Motor neuron (in vitro differentiated cells): ENCODE measurements at regions of chr1 and their contacts with region 1.

Region 1: DNA sequence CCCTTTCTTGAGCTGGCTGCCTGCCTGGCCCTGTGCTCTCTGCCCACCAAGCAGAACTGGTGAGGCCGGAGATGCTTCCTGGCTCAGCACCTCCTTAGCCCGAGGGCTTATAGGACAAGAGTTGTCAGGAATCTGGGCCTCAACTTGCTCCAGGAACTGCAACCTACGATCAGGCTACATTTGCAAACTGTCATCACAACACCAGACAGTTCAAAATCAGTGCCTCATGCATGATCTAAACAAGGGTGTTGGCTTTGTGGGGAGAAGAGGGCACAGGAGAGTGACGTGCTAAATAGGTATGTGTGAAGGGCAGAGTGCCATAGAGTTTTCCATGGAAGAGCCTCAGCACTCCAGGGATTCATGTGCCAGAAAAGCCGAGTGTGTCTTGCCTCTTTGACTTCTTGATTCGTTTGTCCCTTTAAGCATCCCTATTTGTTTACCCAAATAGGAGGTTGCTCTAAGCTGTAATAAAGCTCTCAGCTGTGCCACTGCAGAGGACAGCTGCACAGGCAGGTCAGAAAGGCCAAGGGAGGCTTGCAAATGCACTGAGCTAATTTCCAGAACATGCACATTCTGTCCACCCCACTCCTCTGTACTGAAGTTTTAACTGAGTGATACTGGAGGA is 30.2 kb upstream of the NEK2 start:
- ATAC-seq: peak in 3 of 8 experiments; percentile 89 to 94 (median 93)
- H3K4me3 ChIP-seq: no peak overlapping the region
- H3K27ac ChIP-seq: no peak overlapping the region
- H3K4me1 ChIP-seq: peaks cover 0 to 5% of the 10 kb centered on the region in 2 donors

Region 2: GRCh38 chr1:211944733-211945500 is 239.3 kb after region 1 on chr1:
- in situ Hi-C with region 1: loop called in 1 of 9 experiments (anchors 25 kb)
- ATAC-seq: peak in 4 of 8 experiments; percentile 50 to 97 (median 70)
- H3K4me3 ChIP-seq: no peak overlapping the region
- H3K27ac ChIP-seq: no peak overlapping the region
- H3K4me1 ChIP-seq: no peaks in the 10 kb centered on the region